ENCODE measurements at regions of chr17 and their contacts with region 1.

Region 1: GRCh38 chr17:2828397-2829038 is 32.3 kb downstream of the RAP1GAP2 start:
- DNase-seq: peak; percentile 57
- H3K4me3 Mint-ChIP-seq: no peak overlapping the region
- H3K27ac Mint-ChIP-seq: no peak overlapping the region
- H3K4me1 Mint-ChIP-seq: peaks cover 18% of the 10 kb centered on the region
- H3K27me3 Mint-ChIP-seq: peaks cover 26% of the 10 kb centered on the region

Region 2: DNA sequence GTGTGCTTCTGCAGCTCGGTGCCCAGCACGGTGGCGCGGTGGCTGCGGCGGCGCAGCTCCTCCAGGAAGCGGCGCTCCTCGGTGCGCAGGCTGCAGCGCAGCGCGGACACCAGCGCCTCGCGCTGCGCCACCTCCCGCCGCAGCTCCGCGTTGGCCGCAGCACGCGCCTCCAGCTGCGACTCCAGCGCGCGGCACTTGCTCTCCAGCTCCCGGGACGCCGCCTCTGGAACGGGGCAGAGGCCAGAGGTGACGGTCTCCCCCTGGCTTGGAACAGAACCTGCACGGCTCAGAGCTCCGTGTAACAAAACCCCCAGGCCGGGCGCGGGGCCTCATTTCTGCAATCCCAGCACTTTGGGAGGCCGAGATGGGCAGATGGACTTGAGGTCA is 103.7 kb before region 1 on chr17:
- intact Hi-C with region 1: no loop called
- DNase-seq: no peak
- H3K4me3 Mint-ChIP-seq: no peak overlapping the region
- H3K27ac Mint-ChIP-seq: no peak overlapping the region
- H3K4me1 Mint-ChIP-seq: peaks cover 8% of the 10 kb centered on the region
- H3K27me3 Mint-ChIP-seq: peaks cover 23% of the 10 kb centered on the region

Region 3: GRCh38 chr17:2929881-2930533 is 101.5 kb after region 1 on chr17:
- intact Hi-C with region 1: loop called (anchors 1 kb)
- DNase-seq: no peak
- H3K4me3 Mint-ChIP-seq: no peak overlapping the region
- H3K27ac Mint-ChIP-seq: no peak overlapping the region
- H3K4me1 Mint-ChIP-seq: peaks cover 10% of the 10 kb centered on the region
- H3K27me3 Mint-ChIP-seq: no peaks in the 10 kb centered on the region

Measured in activated T-helper 1 cell treated with anti-CD3 and anti-CD28 coated beads, Interleukin-12 subunit alpha, Interleukin-12 subunit beta, Interleukin-2, Interleukin-4 antibody, amounts not matched to agents 30 ng/mL and 10 ng/mL and 1 ng/mL, durations not matched to agents 14 hours and 24 hours and 36 hours (primary cell).